ENCODE measurements at regions of chr16 and their contacts with region 1.

Region 1: GRCh38 chr16:4402439-4403132 is 13.8 kb downstream of the CORO7 start:
- DNase-seq: peak in 1 of 2 donors; percentile 88
- ATAC-seq: peak; percentile 90

Region 2: GRCh38 chr16:4288148-4288921 is 114.3 kb before region 1 on chr16:
- intact Hi-C with region 1: loop called in 1 of 2 experiments (anchors 10 kb)
- DNase-seq: peak; percentile 65 to 87
- ATAC-seq: peak; percentile 93

Region 3: GRCh38 chr16:4358831-4359561 is 43.6 kb before region 1 on chr16:
- intact Hi-C with region 1: loop called (anchors 5 kb)
- DNase-seq: peak in 1 of 2 donors; percentile 64
- ATAC-seq: peak; percentile 64